B cell (primary cell): ENCODE measurements at regions of chr2 and their contacts with region 1.

Region 1: DNA sequence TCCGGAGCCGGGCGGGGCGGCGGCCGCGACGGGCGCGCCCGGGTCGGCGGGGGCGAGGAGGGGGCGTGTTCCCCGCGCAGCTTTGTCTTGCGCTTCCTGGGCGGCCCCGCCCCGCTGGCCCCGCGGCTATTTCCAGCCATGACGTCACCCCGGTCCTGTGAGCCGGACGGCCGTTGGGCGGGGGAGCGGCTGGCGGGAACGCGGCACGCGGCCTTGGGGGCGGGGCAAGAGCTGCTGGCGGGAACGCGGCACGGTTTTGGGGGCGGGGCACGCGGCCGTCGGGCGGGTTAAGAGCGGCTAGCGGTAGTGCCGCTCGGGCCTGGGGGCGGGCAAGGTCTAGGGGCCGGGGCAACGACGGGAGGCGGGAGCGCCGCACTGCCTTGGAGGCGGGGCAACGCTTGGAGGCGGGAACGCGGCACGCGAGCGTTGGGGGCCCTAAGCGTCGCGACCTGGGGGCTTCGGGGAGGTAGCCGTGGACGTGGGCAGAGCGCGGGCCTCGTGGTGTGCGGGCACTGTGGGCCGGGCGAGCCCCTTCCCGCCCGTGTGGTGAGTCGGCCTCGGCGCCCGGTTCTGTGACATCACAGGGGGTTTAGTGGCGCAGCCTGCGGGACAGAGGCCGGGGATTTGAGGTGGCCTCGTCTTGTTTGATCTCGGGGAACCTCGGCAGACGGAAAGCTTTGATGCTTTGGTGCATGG is 704 bp downstream of the KLF11 start:
- DNase-seq: peak; percentile 97
- ATAC-seq: peak; percentile 61
- H3K4me3 ChIP-seq: peak overlapping the region in 4 of 5 experiments; percentile 40 to 68 (median 58)
- H3K4me3 Mint-ChIP-seq: peak overlapping the region; percentile 87
- H3K27ac ChIP-seq: peak overlapping the region; percentile 58 to 84
- H3K27ac Mint-ChIP-seq: peak overlapping the region; percentile 82
- H3K4me1 ChIP-seq: peaks cover 12 to 20% of the 10 kb centered on the region in 2 donors
- H3K4me1 Mint-ChIP-seq: peaks cover 26% of the 10 kb centered on the region
- H3K27me3 ChIP-seq: no peaks in the 10 kb centered on the region
- H3K27me3 Mint-ChIP-seq: no peaks in the 10 kb centered on the region
- CTCF ChIP-seq: no peak

Region 2: DNA sequence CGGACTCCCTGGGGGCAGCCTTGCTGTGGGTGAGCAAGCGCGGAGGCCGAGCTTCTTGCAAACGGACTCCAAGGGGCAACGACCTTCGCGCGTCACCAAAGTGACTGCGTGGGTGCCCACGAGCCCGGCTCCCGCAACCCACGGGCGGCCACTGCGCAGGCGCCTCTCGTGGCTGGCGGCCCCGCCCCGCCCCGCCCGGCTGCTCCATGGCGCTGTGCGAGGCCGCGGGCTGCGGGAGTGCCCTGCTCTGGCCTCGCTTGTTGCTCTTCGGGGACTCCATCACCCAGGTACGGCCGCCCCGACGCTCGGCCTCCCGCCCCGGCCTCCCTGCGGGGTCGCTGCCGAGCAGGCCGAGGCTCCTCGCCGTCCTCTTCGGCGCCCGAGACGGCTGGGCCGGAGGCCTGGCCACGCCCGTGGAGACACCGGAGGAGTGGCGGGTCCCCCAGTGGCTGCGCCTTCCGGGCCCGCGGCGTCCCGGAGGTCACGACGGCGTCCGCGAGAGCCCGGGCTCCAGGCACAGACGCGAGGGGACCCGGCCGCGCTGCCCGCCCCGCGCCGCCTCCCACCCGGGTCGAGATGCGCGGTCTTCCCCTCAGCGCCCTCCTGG is 569.6 kb before region 1 on chr2 and contains the start of gene IAH1:
- CTCF ChIA-PET with region 1: no interaction called
- POLR2A ChIA-PET with region 1: no interaction called
- intact Hi-C with region 1: loop called (anchors 2 kb)
- DNase-seq: peak; percentile 89
- ATAC-seq: peak; percentile 82
- H3K4me3 ChIP-seq: peak within 1 kb of the TSS; percentile 61 to 85 (median 68)
- H3K4me3 Mint-ChIP-seq: peak within 1 kb of the TSS; percentile 84
- H3K27ac ChIP-seq: peak within 1 kb of the TSS; percentile 62 to 66
- H3K27ac Mint-ChIP-seq: peak within 1 kb of the TSS; percentile 88
- H3K4me1 ChIP-seq: peaks cover 21 to 29% of the 10 kb centered on the region in 2 donors
- H3K4me1 Mint-ChIP-seq: peaks cover 40% of the 10 kb centered on the region
- H3K27me3 ChIP-seq: no peaks in the 10 kb centered on the region
- H3K27me3 Mint-ChIP-seq: no peaks in the 10 kb centered on the region
- CTCF ChIP-seq: no peak
- total RNA-seq, gene IAH1: 47.1 and 54.8 TPM in 2 replicates

Region 3: GRCh38 chr2:9799665-9800632 is 244.1 kb before region 1 on chr2:
- CTCF ChIA-PET with region 1: interaction called, 47 read pairs
- POLR2A ChIA-PET with region 1: no interaction called
- intact Hi-C with region 1: loop called (anchors 1 kb)
- DNase-seq: peak; percentile 85
- ATAC-seq: peak; percentile 94
- H3K4me3 ChIP-seq: peak overlapping the region in 3 of 5 experiments; percentile 5 to 49 (median 21)
- H3K4me3 Mint-ChIP-seq: peak overlapping the region; percentile 59
- H3K27ac ChIP-seq: no peak overlapping the region
- H3K27ac Mint-ChIP-seq: peak overlapping the region; percentile 66
- H3K4me1 ChIP-seq: peaks cover 13 to 20% of the 10 kb centered on the region in 2 donors
- H3K4me1 Mint-ChIP-seq: peaks cover 23% of the 10 kb centered on the region
- H3K27me3 ChIP-seq: peaks cover 0 to 4% (median 2%) of the 10 kb centered on the region in 4 experiments
- H3K27me3 Mint-ChIP-seq: peaks cover 7% of the 10 kb centered on the region
- CTCF ChIP-seq: peak; percentile 96

Region 4: GRCh38 chr2:9951272-9951972 is 92.6 kb before region 1 on chr2 and contains the start of gene GRHL1:
- CTCF ChIA-PET with region 1: interaction called, 3 read pairs
- POLR2A ChIA-PET with region 1: no interaction called
- intact Hi-C with region 1: loop called (anchors 1 kb)
- DNase-seq: peak; percentile 94
- ATAC-seq: peak; percentile 96
- H3K4me3 ChIP-seq: peak within 1 kb of the TSS in 4 of 5 experiments; percentile 51 to 69 (median 62)
- H3K4me3 Mint-ChIP-seq: peak within 1 kb of the TSS; percentile 89
- H3K27ac ChIP-seq: peak within 1 kb of the TSS in 1 of 2 donors; percentile 45
- H3K27ac Mint-ChIP-seq: peak within 1 kb of the TSS; percentile 68
- H3K4me1 ChIP-seq: peaks cover 14 to 19% of the 10 kb centered on the region in 2 donors
- H3K4me1 Mint-ChIP-seq: peaks cover 14% of the 10 kb centered on the region
- H3K27me3 ChIP-seq: peaks cover 0 to 41% (median 20%) of the 10 kb centered on the region in 4 experiments
- H3K27me3 Mint-ChIP-seq: peaks cover 44% of the 10 kb centered on the region
- CTCF ChIP-seq: no peak
- total RNA-seq, gene GRHL1: 0.70 and 0.76 TPM in 2 replicates

Region 5: DNA sequence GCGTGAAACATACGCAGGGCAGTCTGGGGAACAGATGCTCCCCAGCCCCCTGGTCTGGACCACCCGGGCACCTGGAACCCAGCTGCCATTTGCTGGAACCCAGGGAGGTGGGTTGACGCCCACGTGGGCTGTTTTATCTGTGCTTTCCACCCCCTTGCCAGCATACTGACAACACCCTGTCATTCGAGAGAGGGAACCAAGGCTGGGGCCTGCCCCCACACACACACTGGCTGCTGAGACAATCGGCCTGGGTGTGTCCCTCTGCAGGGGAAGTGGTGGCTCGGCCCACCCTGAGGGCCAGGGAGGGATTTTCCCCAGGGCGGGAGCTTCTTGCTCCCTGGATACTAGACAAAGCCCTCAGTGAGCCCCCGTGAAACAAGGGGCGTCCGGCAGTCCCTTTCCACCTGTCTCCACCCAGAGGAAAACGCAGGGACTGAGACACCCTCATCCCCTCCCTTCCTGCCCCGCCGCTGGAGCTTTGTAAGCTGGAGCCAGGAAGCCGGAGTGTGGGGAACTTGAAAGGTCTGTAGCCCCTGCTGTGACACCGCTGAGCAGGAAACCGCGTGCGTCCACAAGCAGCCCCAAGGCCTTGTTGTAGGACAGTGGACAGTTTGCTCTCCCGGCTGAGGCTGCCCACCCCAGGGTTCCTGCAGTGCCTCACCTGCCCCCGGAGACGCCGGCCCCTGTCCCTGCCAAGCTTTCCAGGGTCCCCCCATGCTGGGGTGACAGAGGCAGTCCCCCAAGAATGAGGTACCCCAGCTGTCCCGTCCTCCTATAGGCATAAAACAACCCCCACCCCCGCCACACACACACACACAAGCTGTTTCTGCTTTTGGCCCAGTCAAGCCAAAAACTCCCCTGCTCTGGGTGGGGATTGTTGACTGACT is 14.8 kb before region 1 on chr2:
- CTCF ChIA-PET with region 1: interaction called, 49 read pairs
- POLR2A ChIA-PET with region 1: interaction called, 16 read pairs
- intact Hi-C with region 1: loop called (anchors 1 kb)
- DNase-seq: peak; percentile 90
- ATAC-seq: peak; percentile 98
- H3K4me3 ChIP-seq: peak overlapping the region; percentile 16 to 76 (median 59)
- H3K4me3 Mint-ChIP-seq: peak overlapping the region; percentile 82
- H3K27ac ChIP-seq: peak overlapping the region; percentile 75 to 96
- H3K27ac Mint-ChIP-seq: peak overlapping the region; percentile 86
- H3K4me1 ChIP-seq: peaks cover 44 to 59% of the 10 kb centered on the region in 2 donors
- H3K4me1 Mint-ChIP-seq: peaks cover 48% of the 10 kb centered on the region
- H3K27me3 ChIP-seq: no peaks in the 10 kb centered on the region
- H3K27me3 Mint-ChIP-seq: no peaks in the 10 kb centered on the region
- CTCF ChIP-seq: no peak

Region 6: GRCh38 chr2:10448208-10448645 is 404.2 kb after region 1 on chr2 and contains the start of gene ODC1:
- CTCF ChIA-PET with region 1: interaction called, 7 read pairs
- POLR2A ChIA-PET with region 1: no interaction called
- intact Hi-C with region 1: loop called (anchors 2 kb)
- DNase-seq: peak; percentile 98
- ATAC-seq: peak; percentile 80
- H3K4me3 ChIP-seq: peak within 1 kb of the TSS; percentile 58 to 87 (median 63)
- H3K4me3 Mint-ChIP-seq: peak within 1 kb of the TSS; percentile 91
- H3K27ac ChIP-seq: peak within 1 kb of the TSS; percentile 94 to 97
- H3K27ac Mint-ChIP-seq: peak within 1 kb of the TSS; percentile 85
- H3K4me1 ChIP-seq: peaks cover 44 to 55% of the 10 kb centered on the region in 2 donors
- H3K4me1 Mint-ChIP-seq: peaks cover 38% of the 10 kb centered on the region
- H3K27me3 ChIP-seq: no peaks in the 10 kb centered on the region
- H3K27me3 Mint-ChIP-seq: no peaks in the 10 kb centered on the region
- CTCF ChIP-seq: no peak
- total RNA-seq, gene ODC1: 88.7 and 92.1 TPM in 2 replicates

Region 7: GRCh38 chr2:10993001-10993481 is 949.0 kb after region 1 on chr2:
- CTCF ChIA-PET with region 1: no interaction called
- POLR2A ChIA-PET with region 1: no interaction called
- intact Hi-C with region 1: no loop called
- DNase-seq: no peak
- ATAC-seq: no peak
- H3K4me3 ChIP-seq: no peak overlapping the region
- H3K4me3 Mint-ChIP-seq: no peak overlapping the region
- H3K27ac ChIP-seq: no peak overlapping the region
- H3K27ac Mint-ChIP-seq: no peak overlapping the region
- H3K4me1 ChIP-seq: no peaks in the 10 kb centered on the region
- H3K4me1 Mint-ChIP-seq: no peaks in the 10 kb centered on the region
- H3K27me3 ChIP-seq: no peaks in the 10 kb centered on the region
- H3K27me3 Mint-ChIP-seq: peaks cover 7% of the 10 kb centered on the region
- CTCF ChIP-seq: no peak